ENCODE measurements at regions of chr2 and their contacts with region 1.

Region 1: DNA sequence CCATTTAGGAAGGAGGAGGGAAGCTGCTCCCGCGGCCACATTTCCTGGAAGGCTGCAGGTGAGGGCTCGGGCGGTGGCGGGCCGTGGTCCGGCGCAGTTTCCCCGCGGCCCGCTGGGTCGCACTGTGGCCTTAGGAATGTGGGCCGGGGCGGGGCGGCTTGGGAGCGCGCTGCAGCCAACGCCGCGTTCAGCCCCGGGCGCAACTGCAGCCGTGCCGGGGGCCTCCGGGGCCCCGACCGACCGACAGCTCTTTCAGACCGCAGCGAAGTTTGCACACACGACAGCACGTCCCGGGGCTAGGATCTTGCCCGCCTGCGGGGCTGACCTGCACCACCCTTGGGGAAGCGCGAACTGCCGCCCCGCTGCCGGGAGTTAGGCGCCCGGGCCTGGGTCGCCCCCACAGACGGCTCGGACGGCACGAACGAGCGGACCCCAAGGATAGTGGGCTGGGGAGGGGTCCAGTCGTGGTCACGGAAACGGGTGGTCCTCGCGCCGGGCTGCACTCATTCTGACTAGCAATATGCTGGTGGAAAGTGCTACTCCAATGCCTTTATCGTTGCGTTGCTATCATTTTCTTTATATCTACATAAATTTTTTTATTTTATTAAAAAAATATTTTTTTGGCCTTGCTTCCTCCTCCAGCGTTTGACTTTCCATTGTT is 69.9 kb upstream of the DLX2 start:
- DNase-seq: peak; percentile 60 to 83 (median 72)
- ATAC-seq: peak; percentile 93 to 100 (median 99)
- H3K4me3 ChIP-seq: peak overlapping the region; percentile 32 to 76 (median 62)
- H3K27ac ChIP-seq: peak overlapping the region in 4 of 12 donors; percentile 41 to 74 (median 52)
- H3K4me1 ChIP-seq: peaks cover 0 to 13% (median 6%) of the 10 kb centered on the region in 12 donors
- H3K27me3 ChIP-seq: peaks cover 0 to 23% (median 0%) of the 10 kb centered on the region in 9 donors
- CTCF ChIP-seq: peak; percentile 64 to 92 (median 88)
- POLR2A ChIP-seq: no peak

Region 2: GRCh38 chr2:172226244-172227061 is 53.8 kb after region 1 on chr2:
- intact Hi-C with region 1: loop called in 1 of 10 experiments (anchors 10 kb)
- DNase-seq: no peak
- ATAC-seq: peak in 2 of 4 donors; percentile 50 to 58
- H3K4me3 ChIP-seq: no peak overlapping the region
- H3K27ac ChIP-seq: no peak overlapping the region
- H3K4me1 ChIP-seq: peaks cover 0 to 3% (median 0%) of the 10 kb centered on the region in 12 donors
- H3K27me3 ChIP-seq: no peaks in the 10 kb centered on the region
- CTCF ChIP-seq: peak in 4 of 12 donors; percentile 5 to 10 (median 9)
- POLR2A ChIP-seq: no peak

Region 3: GRCh38 chr2:172484253-172484652 is 311.6 kb after region 1 on chr2:
- intact Hi-C with region 1: loop called in 2 of 10 experiments (anchors 5 kb)
- DNase-seq: no peak
- ATAC-seq: no peak
- H3K4me3 ChIP-seq: no peak overlapping the region
- H3K27ac ChIP-seq: no peak overlapping the region
- H3K4me1 ChIP-seq: peaks cover 0 to 26% (median 14%) of the 10 kb centered on the region in 12 donors
- H3K27me3 ChIP-seq: no peaks in the 10 kb centered on the region
- CTCF ChIP-seq: peak in 9 of 12 donors; percentile 23 to 43 (median 30)
- POLR2A ChIP-seq: no peak

Region 4: DNA sequence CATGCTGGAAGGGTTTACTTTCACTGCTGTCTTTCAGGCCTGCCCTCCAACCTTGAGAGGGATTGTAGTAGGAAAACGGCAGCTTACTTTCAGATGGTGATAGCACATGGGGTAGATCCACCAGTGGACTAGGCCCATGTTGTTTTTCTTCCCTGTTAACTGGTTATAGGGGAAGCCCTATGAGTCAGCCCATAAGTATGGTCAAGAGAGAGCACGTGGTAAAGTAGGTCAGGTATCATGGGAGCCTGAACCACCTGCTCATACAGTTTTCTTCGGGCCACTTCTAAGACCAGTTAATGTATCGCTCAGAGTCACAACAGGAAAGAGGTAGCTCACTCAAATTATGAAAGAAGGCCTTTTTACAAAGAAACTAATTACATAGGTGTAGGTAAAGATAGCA is 416.3 kb after region 1 on chr2:
- intact Hi-C with region 1: loop called in 1 of 10 experiments (anchors 5 kb)
- DNase-seq: no peak
- ATAC-seq: no peak
- H3K4me3 ChIP-seq: no peak overlapping the region
- H3K27ac ChIP-seq: no peak overlapping the region
- H3K4me1 ChIP-seq: peaks cover 0 to 4% (median 0%) of the 10 kb centered on the region in 12 donors
- H3K27me3 ChIP-seq: no peaks in the 10 kb centered on the region
- CTCF ChIP-seq: no peak
- POLR2A ChIP-seq: no peak

Region 5: DNA sequence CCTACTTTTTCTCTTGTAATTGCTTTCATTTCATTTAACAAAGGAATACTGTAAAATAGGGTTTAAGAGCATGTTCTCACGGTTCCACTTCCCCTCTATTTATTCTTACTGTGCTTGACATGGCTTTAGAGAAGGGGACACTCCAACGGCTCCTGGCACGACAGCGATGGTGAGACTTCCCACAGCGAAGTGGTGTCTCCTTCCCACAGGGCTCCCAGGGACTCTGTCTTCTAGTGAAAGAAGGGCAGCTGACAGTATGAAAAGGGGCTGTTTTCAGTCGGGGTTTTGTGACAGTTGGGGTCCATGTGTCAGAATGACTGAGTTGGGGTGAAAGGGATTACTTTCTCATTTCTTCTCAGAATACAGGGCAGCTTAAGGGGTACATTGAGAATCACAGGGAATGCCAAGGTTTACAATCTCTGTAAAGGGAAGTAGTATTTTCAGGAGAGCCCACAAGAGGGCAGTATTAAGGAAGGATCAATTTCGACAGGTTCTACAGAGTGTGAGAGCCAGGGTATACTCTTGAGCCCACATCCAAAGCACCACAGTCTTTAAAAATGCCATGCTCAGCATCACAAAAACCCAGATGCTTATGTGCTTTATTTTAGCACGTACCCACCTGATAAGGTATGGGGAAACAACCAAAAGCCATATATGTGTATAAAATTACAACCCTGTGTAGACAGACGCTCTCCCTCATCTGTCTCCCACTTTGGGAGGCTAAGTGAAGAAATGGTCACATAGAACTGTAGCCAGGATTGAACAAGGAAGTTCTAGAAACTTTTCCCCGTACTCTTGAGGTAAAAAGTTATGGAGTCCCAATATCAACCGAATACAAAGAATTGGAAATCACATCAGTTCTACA is 531.7 kb after region 1 on chr2:
- intact Hi-C with region 1: loop called in 1 of 10 experiments (anchors 10 kb)
- DNase-seq: no peak
- ATAC-seq: peak in 3 of 4 donors; percentile 52 to 67 (median 54)
- H3K4me3 ChIP-seq: no peak overlapping the region
- H3K27ac ChIP-seq: no peak overlapping the region
- H3K4me1 ChIP-seq: no peaks in the 10 kb centered on the region
- H3K27me3 ChIP-seq: peaks cover 0 to 6% (median 0%) of the 10 kb centered on the region in 9 donors
- CTCF ChIP-seq: peak; percentile 38 to 67 (median 48)
- POLR2A ChIP-seq: no peak

Region 6: DNA sequence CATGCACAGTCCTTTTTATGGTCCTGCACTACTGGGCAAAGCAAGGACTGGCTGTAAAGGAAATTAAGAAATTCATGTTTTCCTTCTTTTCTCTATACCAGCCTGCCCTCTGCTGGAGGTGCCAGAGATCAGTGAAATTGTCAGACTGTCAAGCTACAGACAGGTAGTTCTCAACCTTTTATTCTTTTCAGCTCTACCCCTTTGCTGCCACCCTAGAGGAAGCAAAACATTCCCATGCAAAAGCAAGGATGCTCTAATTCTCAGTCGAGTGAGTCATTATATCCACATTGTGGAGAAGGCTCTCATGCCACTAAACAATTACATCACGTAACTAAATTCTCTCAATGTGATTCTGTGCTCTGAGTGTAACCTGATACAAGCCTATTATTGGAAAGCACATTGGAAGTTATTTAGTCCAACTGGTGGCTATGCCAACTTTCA is 538.0 kb after region 1 on chr2:
- intact Hi-C with region 1: loop called in 2 of 10 experiments (anchors 10 kb)
- DNase-seq: peak in 1 of 5 donors; percentile 35
- ATAC-seq: peak; percentile 78 to 84 (median 82)
- H3K4me3 ChIP-seq: no peak overlapping the region
- H3K27ac ChIP-seq: peak overlapping the region in 9 of 12 donors; percentile 24 to 65 (median 53)
- H3K4me1 ChIP-seq: peaks cover 0 to 18% (median 3%) of the 10 kb centered on the region in 12 donors
- H3K27me3 ChIP-seq: peaks cover 0 to 6% (median 0%) of the 10 kb centered on the region in 9 donors
- CTCF ChIP-seq: peak; percentile 34 to 74 (median 56)
- POLR2A ChIP-seq: no peak

Measured in heart left ventricle (tissue), 16 donors.